ENCODE measurements at regions of chr14 and their contacts with region 1.

Region 1: GRCh38 chr14:57568554-57568953 is 74.9 kb upstream of the CCDC198 start:
- DNase-seq: no peak
- ATAC-seq: no peak
- H3K4me3 ChIP-seq: no peak overlapping the region
- H3K27ac ChIP-seq: no peak overlapping the region
- H3K4me1 ChIP-seq: no peaks in the 10 kb centered on the region
- H3K27me3 ChIP-seq: no peaks in the 10 kb centered on the region
- CTCF ChIP-seq: no peak
- EP300 ChIP-seq: no peak
- POLR2A ChIP-seq: no peak
- RAD21 ChIP-seq: no peak

Region 2: DNA sequence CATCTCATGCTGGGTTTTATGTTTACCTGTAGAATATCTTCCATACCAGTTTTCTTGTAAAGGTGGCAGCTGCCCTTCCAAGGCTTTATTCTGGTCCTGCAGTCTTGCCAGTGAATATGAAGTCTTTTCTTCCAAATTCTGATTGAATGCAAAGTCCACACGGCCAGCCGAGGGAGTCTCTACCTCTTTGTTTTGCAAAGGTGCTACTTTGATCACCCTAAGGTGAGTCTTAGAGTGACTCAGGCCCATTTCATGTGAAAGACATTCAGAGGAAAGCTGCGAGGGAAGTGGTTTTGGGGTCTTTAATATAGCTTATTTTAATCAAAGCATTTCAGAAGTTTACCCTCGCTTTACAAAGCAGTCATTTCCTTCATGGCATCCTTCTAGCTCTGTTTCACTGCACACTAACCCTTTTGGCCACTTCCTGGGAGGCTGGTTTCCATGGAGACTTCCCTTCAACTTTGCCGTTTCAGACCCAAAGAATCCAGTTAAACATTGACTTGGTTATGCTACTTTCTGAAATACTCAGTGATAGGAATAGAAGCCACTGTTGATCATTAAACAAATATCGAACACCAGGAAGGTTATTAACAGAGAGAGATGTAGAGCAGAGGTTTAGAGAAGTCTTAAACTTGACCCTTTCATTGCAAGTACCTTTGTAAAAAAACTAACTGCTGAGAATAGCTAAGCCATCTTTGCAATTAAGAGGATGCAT is 74.9 kb before region 1 on chr14 and contains the start of gene CCDC198:
- CTCF ChIA-PET with region 1: interaction called, 25 read pairs
- POLR2A ChIA-PET with region 1: interaction called, 5 read pairs
- RAD21 ChIA-PET with region 1: interaction called, 6 read pairs
- SMC1A ChIA-PET with region 1: interaction called, 8 read pairs
- in situ Hi-C with region 1: loop called (anchors 5 kb)
- intact Hi-C with region 1: no loop called
- DNase-seq: peak; percentile 65
- ATAC-seq: peak; percentile 76
- H3K4me3 ChIP-seq: no peak within 1 kb of the TSS
- H3K27ac ChIP-seq: no peak within 1 kb of the TSS
- H3K4me1 ChIP-seq: no peaks in the 10 kb centered on the region
- H3K27me3 ChIP-seq: no peaks in the 10 kb centered on the region
- CTCF ChIP-seq: no peak
- EP300 ChIP-seq: no peak
- POLR2A ChIP-seq: no peak
- RAD21 ChIP-seq: no peak
- polyA plus RNA-seq, gene CCDC198: 1.3 to 1.9 TPM

Measured in GM12878 (cell line).